ENCODE measurements at regions of chr2 and their contacts with region 1.

Region 1: GRCh38 chr2:20291106-20291564 is 59.5 kb downstream of the PUM2 start:
- DNase-seq: peak; percentile 93
- ATAC-seq: peak; percentile 100
- H3K4me3 ChIP-seq: no peak overlapping the region
- H3K27ac ChIP-seq: peak overlapping the region; percentile 2; the same call in 1 of the 2 replicates
- H3K4me1 ChIP-seq: peaks cover 15% of the 10 kb centered on the region
- H3K27me3 ChIP-seq: no peaks in the 10 kb centered on the region
- CTCF ChIP-seq: peak; percentile 84

Region 2: DNA sequence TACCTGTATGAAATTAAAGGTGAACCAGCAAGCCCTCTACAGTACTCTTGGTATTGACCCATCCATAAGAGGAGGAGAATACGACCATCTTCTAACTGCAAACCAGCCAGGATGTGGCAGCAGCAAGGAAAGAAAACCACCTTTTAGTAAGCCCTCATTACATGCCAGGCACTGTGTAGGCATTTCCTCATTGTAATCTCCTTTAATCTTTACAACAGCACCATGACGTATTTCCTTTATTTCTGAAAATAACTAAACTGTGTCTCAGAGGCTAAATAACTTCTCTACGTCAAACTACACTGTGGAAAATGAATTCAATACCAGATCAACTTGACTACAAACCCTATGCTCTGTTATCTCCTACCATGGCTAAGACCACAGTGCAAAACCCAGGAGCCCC is 319.4 kb before region 1 on chr2:
- CTCF ChIA-PET with region 1: no interaction called
- POLR2A ChIA-PET with region 1: no interaction called
- intact Hi-C with region 1: no loop called
- DNase-seq: no peak
- ATAC-seq: no peak
- H3K4me3 ChIP-seq: no peak overlapping the region
- H3K27ac ChIP-seq: no peak overlapping the region
- H3K4me1 ChIP-seq: no peaks in the 10 kb centered on the region
- H3K27me3 ChIP-seq: no peaks in the 10 kb centered on the region
- CTCF ChIP-seq: no peak

Region 3: DNA sequence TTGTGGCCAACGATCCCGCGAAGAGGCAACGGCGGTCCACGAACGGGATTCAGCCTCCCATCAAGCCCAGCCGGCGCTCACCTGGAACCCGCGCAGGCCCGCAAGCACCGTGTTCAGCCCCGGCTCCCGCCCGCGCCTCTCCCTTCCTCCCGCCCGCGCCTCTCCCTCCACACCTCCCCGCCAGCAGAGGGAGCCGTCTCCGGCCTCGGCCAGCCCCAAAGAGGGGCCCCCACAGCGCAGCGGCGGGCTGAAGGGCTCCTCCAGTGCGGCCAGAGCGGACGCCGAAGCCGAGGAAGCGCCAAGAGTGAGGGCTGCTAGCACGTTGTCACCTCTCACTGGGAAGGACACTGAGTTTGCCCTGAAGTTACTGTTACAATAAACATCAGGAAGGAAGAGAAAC is 184.4 kb before region 1 on chr2:
- CTCF ChIA-PET with region 1: interaction called, 3 read pairs
- POLR2A ChIA-PET with region 1: no interaction called
- intact Hi-C with region 1: loop called (anchors 1 kb)
- DNase-seq: peak; percentile 71
- ATAC-seq: peak; percentile 83
- H3K4me3 ChIP-seq: peak overlapping the region; percentile 63
- H3K27ac ChIP-seq: no peak overlapping the region
- H3K4me1 ChIP-seq: peaks cover 28% of the 10 kb centered on the region
- H3K27me3 ChIP-seq: no peaks in the 10 kb centered on the region
- CTCF ChIP-seq: peak; percentile 71

Region 4: DNA sequence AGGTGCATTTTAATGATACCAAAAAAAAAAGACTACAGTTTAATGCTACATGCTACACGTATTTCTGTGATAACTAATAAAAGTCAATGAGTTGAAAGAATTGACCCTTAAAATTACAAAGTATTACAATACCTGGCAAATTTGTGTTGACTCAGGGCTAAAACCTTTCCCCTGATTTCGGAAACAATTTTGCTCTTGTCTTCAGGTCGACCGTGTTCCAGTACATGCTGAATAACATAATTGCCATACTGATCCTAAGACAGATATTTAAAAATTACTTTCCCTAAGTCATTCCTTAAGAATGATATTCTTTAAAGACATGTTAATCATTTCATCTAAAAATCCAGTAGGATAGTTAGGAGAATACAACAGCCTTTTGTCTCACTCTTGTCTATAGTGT is 36.4 kb before region 1 on chr2:
- CTCF ChIA-PET with region 1: no interaction called
- POLR2A ChIA-PET with region 1: no interaction called
- intact Hi-C with region 1: loop called (anchors 5 kb)
- DNase-seq: no peak
- ATAC-seq: no peak
- H3K4me3 ChIP-seq: no peak overlapping the region
- H3K27ac ChIP-seq: no peak overlapping the region
- H3K4me1 ChIP-seq: no peaks in the 10 kb centered on the region
- H3K27me3 ChIP-seq: no peaks in the 10 kb centered on the region
- CTCF ChIP-seq: no peak

Measured in PC-3 (cell line).